A549 (cell line): ENCODE measurements at regions of chr7 and their contacts with region 1.

Region 1: GRCh38 chr7:105876091-105876963 is at the start of gene ATXN7L1:
- DNase-seq: peak; percentile 87 to 96
- ATAC-seq: peak; percentile 86 to 90
- H3K4me3 ChIP-seq: peak within 1 kb of the TSS; percentile 84
- H3K27ac ChIP-seq: peak within 1 kb of the TSS; percentile 95 to 96
- H3K4me1 ChIP-seq: peaks cover 24% of the 10 kb centered on the region
- CTCF ChIP-seq: peak; percentile 91
- EP300 ChIP-seq: no peak
- POLR2A ChIP-seq: peak; percentile 86
- RAD21 ChIP-seq: no peak; a peak in 2 of 5 replicates
- polyA plus RNA-seq, gene ATXN7L1: 4.5 and 4.8 TPM in 2 replicates

Region 2: DNA sequence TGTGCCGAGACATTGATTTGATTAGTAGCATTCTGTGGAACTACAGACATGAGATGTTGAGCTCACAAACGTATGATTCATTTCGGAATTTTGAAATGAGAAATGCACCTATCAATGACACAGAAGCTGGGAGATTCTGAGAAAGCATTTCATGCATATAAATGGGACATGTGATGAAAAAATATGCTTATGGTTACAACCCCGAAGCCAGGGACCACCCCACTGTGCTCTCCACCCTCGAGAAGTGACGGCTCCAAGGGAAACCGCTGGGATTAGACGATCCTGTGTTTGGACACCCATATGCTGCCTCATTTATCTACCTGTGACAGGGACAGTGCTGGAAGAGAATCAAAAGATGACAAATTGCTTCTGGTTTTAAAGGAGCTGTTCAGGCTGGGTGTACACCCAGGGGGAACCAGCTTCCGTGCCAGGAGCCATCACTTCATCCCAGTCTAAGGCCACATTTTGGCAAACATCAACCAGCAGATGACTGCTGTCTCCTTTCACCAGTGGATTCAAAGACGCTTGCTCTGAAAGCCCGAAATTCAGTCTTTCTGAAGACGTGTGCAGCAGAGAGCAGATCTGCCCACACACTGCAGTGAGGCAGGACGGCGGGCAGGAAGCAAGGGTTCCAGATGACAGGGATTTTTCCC is 109.8 kb before region 1 on chr7:
- CTCF ChIA-PET with region 1: interaction called, 34 read pairs
- POLR2A ChIA-PET with region 1: no interaction called
- DNase-seq: no peak
- ATAC-seq: no peak
- H3K4me3 ChIP-seq: no peak overlapping the region
- H3K27ac ChIP-seq: no peak overlapping the region
- H3K4me1 ChIP-seq: peaks cover 12% of the 10 kb centered on the region
- CTCF ChIP-seq: no peak
- EP300 ChIP-seq: no peak
- POLR2A ChIP-seq: no peak
- RAD21 ChIP-seq: no peak

Region 3: DNA sequence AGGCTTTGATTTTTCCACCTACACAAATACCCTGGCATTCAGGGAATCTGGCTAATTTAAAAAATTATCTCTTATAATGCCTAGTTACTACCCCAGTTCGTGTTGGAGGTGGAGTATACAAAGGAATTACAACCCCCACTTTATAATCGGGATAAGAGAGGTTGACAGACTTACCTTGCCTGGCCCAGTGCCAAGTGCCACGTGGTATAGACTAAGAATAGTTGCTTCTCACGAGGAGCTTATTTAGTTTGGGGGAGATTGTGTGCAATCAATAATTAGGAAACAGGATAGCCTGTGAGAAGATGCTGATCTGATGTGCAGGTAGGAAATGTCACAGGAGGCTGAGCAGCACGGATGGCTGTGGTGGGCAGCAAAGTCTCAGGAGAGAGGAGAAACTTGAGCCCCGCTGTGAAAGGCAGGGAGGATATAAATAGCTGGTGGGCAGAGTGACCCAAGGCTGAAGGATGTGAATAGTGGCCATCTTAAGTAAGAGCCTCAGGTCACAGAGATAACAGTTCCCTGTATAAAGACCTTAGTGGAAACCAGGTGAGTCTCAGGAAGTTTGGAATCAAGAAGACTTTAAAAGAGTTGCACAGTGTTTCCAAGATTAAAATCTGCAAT is 11.4 kb after region 1 on chr7:
- CTCF ChIA-PET with region 1: interaction called, 12 read pairs
- POLR2A ChIA-PET with region 1: interaction called, 4 read pairs
- DNase-seq: no peak
- ATAC-seq: no peak
- H3K4me3 ChIP-seq: no peak overlapping the region
- H3K27ac ChIP-seq: no peak overlapping the region
- H3K4me1 ChIP-seq: 0 out of 3 replicates have a peak, but pooled peaks cover 4% of the 10 kb centered on the region
- CTCF ChIP-seq: no peak
- EP300 ChIP-seq: no peak
- POLR2A ChIP-seq: no peak
- RAD21 ChIP-seq: no peak